ENCODE measurements at regions of chr13 and their contacts with region 1.

Region 1: GRCh38 chr13:94312511-94313216 is 166.8 kb downstream of the DCT start:
- DNase-seq: no peak
- H3K4me3 Mint-ChIP-seq: peak overlapping the region; percentile 51
- H3K27ac Mint-ChIP-seq: peak overlapping the region; percentile 92
- H3K4me1 Mint-ChIP-seq: peaks cover 47% of the 10 kb centered on the region
- H3K27me3 Mint-ChIP-seq: no peaks in the 10 kb centered on the region

Region 2: GRCh38 chr13:94323764-94324758 is 11.4 kb after region 1 on chr13:
- CTCF ChIA-PET with region 1: interaction called, 19 read pairs
- POLR2A ChIA-PET with region 1: interaction called, 18 read pairs
- DNase-seq: peak; percentile 58
- H3K4me3 Mint-ChIP-seq: peak overlapping the region; percentile 58
- H3K27ac Mint-ChIP-seq: peak overlapping the region; percentile 100
- H3K4me1 Mint-ChIP-seq: peaks cover 69% of the 10 kb centered on the region
- H3K27me3 Mint-ChIP-seq: no peaks in the 10 kb centered on the region